Activated CD4-positive, alpha-beta T cell treated with anti-CD3 and anti-CD28 coated beads, Interleukin-2, amount 10 ng/mL, durations not matched to agents 24 days and 14 days (primary cell): ENCODE measurements at regions of chr4 and their contacts with region 1.

Region 1: DNA sequence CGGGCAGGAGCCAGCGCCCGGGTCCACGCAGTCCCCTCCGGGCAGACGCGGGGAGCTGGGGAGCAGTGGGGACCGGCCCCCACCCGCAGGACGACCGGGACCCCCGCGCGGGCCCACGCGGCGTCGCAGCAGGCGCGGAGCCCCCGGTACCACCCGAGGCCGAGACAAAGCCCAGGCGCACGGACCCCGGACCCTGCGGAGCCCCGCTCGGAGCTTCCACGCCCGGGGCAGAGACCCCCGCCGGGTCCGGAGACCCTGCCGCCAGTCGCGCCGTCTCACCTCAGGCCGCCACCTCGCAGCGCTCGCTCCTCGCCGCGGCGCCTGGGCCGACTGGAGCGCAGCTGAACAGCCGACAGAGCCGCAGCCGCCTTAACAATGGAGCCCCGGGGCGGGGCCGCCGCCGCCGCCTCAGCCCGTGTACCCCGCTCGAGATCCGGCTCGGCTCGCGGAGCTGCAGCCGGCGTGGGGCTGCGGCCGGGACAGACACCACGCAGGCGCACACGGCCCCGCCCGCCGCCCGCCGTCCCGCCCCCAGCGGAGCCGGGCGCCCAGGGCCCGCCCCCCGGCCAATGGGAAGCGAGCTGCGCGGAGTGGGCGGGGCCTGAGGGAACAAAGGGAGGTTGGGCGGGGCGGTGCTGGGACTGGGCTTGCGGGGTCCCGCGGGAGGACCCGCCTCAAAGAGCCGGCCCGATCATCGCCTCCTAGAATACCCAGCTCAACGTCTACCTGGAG is at the start of gene AFAP1:
- DNase-seq: peak; percentile 97
- H3K4me3 Mint-ChIP-seq: peak within 1 kb of the TSS; percentile 66
- H3K27ac Mint-ChIP-seq: no peak within 1 kb of the TSS
- H3K4me1 Mint-ChIP-seq: peaks cover 25% of the 10 kb centered on the region
- H3K27me3 Mint-ChIP-seq: peaks cover 16% of the 10 kb centered on the region
- total RNA-seq, gene AFAP1: 37.6 and 40.8 TPM in 2 replicates

Region 2: GRCh38 chr4:7960790-7961655 is 21.5 kb after region 1 on chr4:
- intact Hi-C with region 1: loop called (anchors 1 kb)
- DNase-seq: peak; percentile 91
- H3K4me3 Mint-ChIP-seq: peak overlapping the region; percentile 63
- H3K27ac Mint-ChIP-seq: peak overlapping the region; percentile 97
- H3K4me1 Mint-ChIP-seq: peaks cover 56% of the 10 kb centered on the region
- H3K27me3 Mint-ChIP-seq: peaks cover 5% of the 10 kb centered on the region

Region 3: GRCh38 chr4:7970394-7970902 is 30.9 kb after region 1 on chr4:
- intact Hi-C with region 1: loop called (anchors 1 kb)
- DNase-seq: no peak
- H3K4me3 Mint-ChIP-seq: peak overlapping the region; percentile 96
- H3K27ac Mint-ChIP-seq: peak overlapping the region; percentile 99
- H3K4me1 Mint-ChIP-seq: peaks cover 71% of the 10 kb centered on the region
- H3K27me3 Mint-ChIP-seq: no peaks in the 10 kb centered on the region

Region 4: GRCh38 chr4:7987148-7987989 is 47.8 kb after region 1 on chr4:
- intact Hi-C with region 1: loop called (anchors 1 kb)
- DNase-seq: peak; percentile 93
- H3K4me3 Mint-ChIP-seq: no peak overlapping the region
- H3K27ac Mint-ChIP-seq: no peak overlapping the region
- H3K4me1 Mint-ChIP-seq: peaks cover 4% of the 10 kb centered on the region
- H3K27me3 Mint-ChIP-seq: peaks cover 1% of the 10 kb centered on the region